KBM-7 (cell line): ENCODE measurements at regions of chr13 and their contacts with region 1.

Region 1: GRCh38 chr13:49828458-49828857 is 36.0 kb upstream of the KPNA3 start:
- DNase-seq: peak; percentile 90

Region 2: DNA sequence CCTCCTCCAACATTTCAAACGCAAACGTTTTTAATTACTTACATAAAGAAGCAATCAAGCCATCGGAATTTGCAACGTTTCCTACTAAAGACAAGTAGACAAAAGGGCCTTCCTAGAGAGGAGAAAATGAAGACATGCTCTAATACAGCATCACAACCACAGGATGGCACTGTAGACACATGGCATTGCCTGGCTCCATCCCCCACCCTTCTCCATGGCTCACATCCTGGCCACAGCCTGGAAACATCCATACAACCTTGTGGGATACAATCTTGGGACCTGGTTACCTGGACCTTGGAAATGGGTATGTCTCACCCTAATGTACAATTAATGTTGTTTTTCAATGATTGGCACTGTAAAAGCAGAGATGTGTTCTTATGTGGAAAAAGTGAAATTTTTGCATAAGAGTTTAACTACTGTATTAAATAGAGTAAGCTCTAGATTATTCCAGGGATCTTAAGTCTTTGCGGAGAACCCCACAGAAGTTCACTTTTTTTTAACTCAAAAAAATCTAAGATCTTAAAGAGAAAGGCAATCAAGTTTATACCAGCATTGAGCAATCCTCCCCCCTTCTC is 158.6 kb before region 1 on chr13:
- in situ Hi-C with region 1: loop called (anchors 25 kb)
- DNase-seq: peak; percentile 70